WTC11 (cell line): ENCODE measurements at regions of chr6 and their contacts with region 1.

Region 1: GRCh38 chr6:168071336-168072019 is 7.5 kb downstream of the FRMD1 start:
- DNase-seq: peak; percentile 72
- ATAC-seq: peak; percentile 96
- H3K4me3 Mint-ChIP-seq: no peak overlapping the region
- H3K27ac Mint-ChIP-seq: no peak overlapping the region
- H3K4me1 Mint-ChIP-seq: peaks cover 6% of the 10 kb centered on the region
- H3K27me3 Mint-ChIP-seq: no peaks in the 10 kb centered on the region
- CTCF ChIP-seq: peak; percentile 17; the same call in 1 of the 2 replicates

Region 2: GRCh38 chr6:168117942-168118341 is 46.5 kb after region 1 on chr6:
- CTCF ChIA-PET with region 1: interaction called, 11 read pairs
- POLR2A ChIA-PET with region 1: no interaction called
- DNase-seq: no peak
- ATAC-seq: peak; percentile 54
- H3K4me3 Mint-ChIP-seq: no peak overlapping the region
- H3K27ac Mint-ChIP-seq: no peak overlapping the region
- H3K4me1 Mint-ChIP-seq: peaks cover 19% of the 10 kb centered on the region
- H3K27me3 Mint-ChIP-seq: peaks cover 7% of the 10 kb centered on the region
- CTCF ChIP-seq: no peak

Region 3: DNA sequence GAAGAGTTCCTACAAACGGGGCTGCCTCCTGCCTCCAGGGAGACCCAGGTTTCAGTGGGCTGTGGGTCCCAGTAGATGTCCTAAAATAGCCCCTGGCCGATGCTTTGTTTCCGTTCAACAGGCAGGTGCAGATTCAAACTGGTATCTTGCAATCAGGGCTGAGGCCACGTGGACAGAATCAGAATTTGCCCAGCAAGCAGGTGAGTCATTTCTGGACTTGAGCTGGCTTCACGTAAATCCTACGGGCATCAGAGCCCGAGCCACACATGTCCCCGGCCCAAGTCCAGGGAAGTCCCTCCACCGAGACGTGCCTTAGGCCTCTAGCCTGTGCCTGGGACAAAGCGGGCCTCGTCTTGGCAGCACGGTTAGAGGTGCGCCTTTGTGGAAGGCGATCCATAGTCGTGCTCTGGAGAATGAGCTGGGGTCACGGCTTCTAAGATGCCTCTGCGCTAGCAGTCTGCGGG is 109.1 kb after region 1 on chr6:
- CTCF ChIA-PET with region 1: no interaction called
- POLR2A ChIA-PET with region 1: no interaction called
- DNase-seq: no peak
- ATAC-seq: peak; percentile 35; the same call in 1 of the 2 replicates
- H3K4me3 Mint-ChIP-seq: no peak overlapping the region
- H3K27ac Mint-ChIP-seq: no peak overlapping the region
- H3K4me1 Mint-ChIP-seq: peaks cover 46% of the 10 kb centered on the region
- H3K27me3 Mint-ChIP-seq: peaks cover 4% of the 10 kb centered on the region
- CTCF ChIP-seq: no peak